HepG2 (cell line): ENCODE measurements at regions of chr12 and their contacts with region 1.

Region 1: DNA sequence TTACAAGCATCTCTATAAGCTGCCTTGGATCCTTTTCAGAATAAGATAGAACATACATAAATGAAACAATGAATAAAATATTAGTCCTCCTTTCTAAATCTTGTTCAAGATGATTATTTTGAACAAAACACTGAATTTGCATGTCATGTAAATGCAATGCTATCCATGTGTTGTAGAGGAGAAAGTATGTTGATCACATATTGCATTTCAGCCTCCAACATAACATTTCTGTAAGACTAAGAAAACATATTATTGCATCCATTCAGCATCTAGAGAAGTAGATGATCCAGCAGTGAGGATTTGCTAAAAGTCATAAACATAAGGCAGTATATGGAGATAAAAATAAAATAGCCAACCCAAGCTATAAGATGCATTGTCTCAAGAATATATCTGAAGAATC is 172.6 kb downstream of the CPNE8 start:
- DNase-seq: no peak
- ATAC-seq: no peak
- H3K4me3 ChIP-seq: no peak overlapping the region
- H3K27ac ChIP-seq: no peak overlapping the region
- H3K4me1 ChIP-seq: no peaks in the 10 kb centered on the region
- H3K27me3 ChIP-seq: no peaks in the 10 kb centered on the region
- CTCF ChIP-seq: no peak
- EP300 ChIP-seq: no peak
- POLR2A ChIP-seq: no peak
- RAD21 ChIP-seq: no peak

Region 2: DNA sequence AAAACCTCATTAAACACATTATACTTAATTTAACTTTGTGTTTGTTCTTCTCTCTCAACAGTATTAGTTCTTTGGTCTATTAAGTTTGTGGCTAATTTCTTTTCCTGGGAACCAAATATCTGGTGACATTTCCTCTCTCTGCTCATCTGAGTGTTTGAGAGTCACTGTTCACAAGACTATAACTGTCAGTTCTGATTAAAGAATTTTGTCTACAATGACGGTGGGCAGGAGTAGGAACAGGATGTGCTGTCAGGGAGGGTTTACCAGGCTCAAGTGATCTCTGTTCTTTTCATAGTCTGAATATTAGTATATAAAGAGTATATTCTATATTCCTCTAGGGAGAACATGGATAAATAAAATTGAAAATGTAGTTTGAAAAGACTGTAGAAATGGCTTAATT is 323.2 kb before region 1 on chr12:
- CTCF ChIA-PET with region 1: no interaction called
- POLR2A ChIA-PET with region 1: no interaction called
- in situ Hi-C with region 1: no loop called
- intact Hi-C with region 1: loop called (anchors 5 kb)
- DNase-seq: no peak
- ATAC-seq: no peak
- H3K4me3 ChIP-seq: no peak overlapping the region
- H3K27ac ChIP-seq: no peak overlapping the region
- H3K4me1 ChIP-seq: no peaks in the 10 kb centered on the region
- H3K27me3 ChIP-seq: no peaks in the 10 kb centered on the region
- CTCF ChIP-seq: no peak
- EP300 ChIP-seq: no peak
- POLR2A ChIP-seq: no peak
- RAD21 ChIP-seq: no peak

Region 3: GRCh38 chr12:38809832-38810231 is 77.1 kb after region 1 on chr12:
- CTCF ChIA-PET with region 1: no interaction called
- POLR2A ChIA-PET with region 1: no interaction called
- in situ Hi-C with region 1: no loop called
- intact Hi-C with region 1: no loop called
- DNase-seq: no peak
- ATAC-seq: no peak
- H3K4me3 ChIP-seq: no peak overlapping the region
- H3K27ac ChIP-seq: no peak overlapping the region
- H3K4me1 ChIP-seq: no peaks in the 10 kb centered on the region
- H3K27me3 ChIP-seq: no peaks in the 10 kb centered on the region
- CTCF ChIP-seq: no peak
- EP300 ChIP-seq: no peak
- POLR2A ChIP-seq: no peak
- RAD21 ChIP-seq: no peak

Region 4: DNA sequence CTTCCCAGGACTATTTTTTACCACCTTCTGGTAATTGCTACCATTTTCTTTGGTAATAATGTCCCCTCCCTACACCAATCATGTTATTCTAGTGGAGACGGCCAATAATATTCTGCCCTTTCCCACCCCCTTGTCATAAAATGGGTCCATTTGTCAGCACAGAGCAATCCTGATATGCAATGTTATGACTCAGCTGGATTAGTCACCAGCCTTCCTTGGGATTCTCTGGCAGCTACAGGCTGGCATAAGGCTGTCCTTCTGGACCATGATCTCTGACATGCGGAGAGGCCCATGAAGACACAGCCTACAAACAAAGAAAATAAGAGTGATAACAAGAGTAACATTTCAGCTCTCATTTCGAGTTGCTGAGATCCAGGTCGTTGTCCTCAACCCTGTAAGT is 394.6 kb after region 1 on chr12:
- CTCF ChIA-PET with region 1: no interaction called
- POLR2A ChIA-PET with region 1: no interaction called
- in situ Hi-C with region 1: no loop called
- intact Hi-C with region 1: no loop called
- DNase-seq: peak; percentile 3
- ATAC-seq: peak; percentile 62
- H3K4me3 ChIP-seq: no peak overlapping the region
- H3K27ac ChIP-seq: no peak overlapping the region
- H3K4me1 ChIP-seq: no peaks in the 10 kb centered on the region
- H3K27me3 ChIP-seq: no peaks in the 10 kb centered on the region
- CTCF ChIP-seq: no peak
- EP300 ChIP-seq: no peak
- POLR2A ChIP-seq: no peak
- RAD21 ChIP-seq: no peak